ENCODE measurements at regions of chrX and their contacts with region 1.

Region 1: GRCh38 chrX:118823263-118824172 is at the start of gene ZCCHC12:
- DNase-seq: peak; percentile 28
- ATAC-seq: peak; percentile 88
- H3K4me3 Mint-ChIP-seq: peak within 1 kb of the TSS; percentile 29
- H3K27ac Mint-ChIP-seq: no peak within 1 kb of the TSS
- H3K4me1 Mint-ChIP-seq: peaks cover 11% of the 10 kb centered on the region
- H3K27me3 Mint-ChIP-seq: peaks cover 48% of the 10 kb centered on the region
- total RNA-seq, gene ZCCHC12: not detected

Region 2: GRCh38 chrX:118839334-118839958 is 15.9 kb after region 1 on chrX:
- CTCF ChIA-PET with region 1: interaction called, 14 read pairs
- POLR2A ChIA-PET with region 1: no interaction called
- DNase-seq: peak; percentile 60
- ATAC-seq: peak; percentile 86
- H3K4me3 Mint-ChIP-seq: peak overlapping the region; percentile 15
- H3K27ac Mint-ChIP-seq: no peak overlapping the region
- H3K4me1 Mint-ChIP-seq: no peaks in the 10 kb centered on the region
- H3K27me3 Mint-ChIP-seq: peaks cover 8% of the 10 kb centered on the region

Region 3: GRCh38 chrX:118893923-118894322 is 70.4 kb after region 1 on chrX:
- CTCF ChIA-PET with region 1: no interaction called
- POLR2A ChIA-PET with region 1: no interaction called
- DNase-seq: no peak
- ATAC-seq: no peak
- H3K4me3 Mint-ChIP-seq: no peak overlapping the region
- H3K27ac Mint-ChIP-seq: no peak overlapping the region
- H3K4me1 Mint-ChIP-seq: no peaks in the 10 kb centered on the region
- H3K27me3 Mint-ChIP-seq: no peaks in the 10 kb centered on the region

Measured in activated CD8-positive, alpha-beta T cell treated with anti-CD3 and anti-CD28 coated beads, Interleukin-2, amount 10 ng/mL, durations not matched to agents 7 days and 5 days (primary cell).